ENCODE measurements at regions of chr16 and their contacts with region 1.

Region 1: DNA sequence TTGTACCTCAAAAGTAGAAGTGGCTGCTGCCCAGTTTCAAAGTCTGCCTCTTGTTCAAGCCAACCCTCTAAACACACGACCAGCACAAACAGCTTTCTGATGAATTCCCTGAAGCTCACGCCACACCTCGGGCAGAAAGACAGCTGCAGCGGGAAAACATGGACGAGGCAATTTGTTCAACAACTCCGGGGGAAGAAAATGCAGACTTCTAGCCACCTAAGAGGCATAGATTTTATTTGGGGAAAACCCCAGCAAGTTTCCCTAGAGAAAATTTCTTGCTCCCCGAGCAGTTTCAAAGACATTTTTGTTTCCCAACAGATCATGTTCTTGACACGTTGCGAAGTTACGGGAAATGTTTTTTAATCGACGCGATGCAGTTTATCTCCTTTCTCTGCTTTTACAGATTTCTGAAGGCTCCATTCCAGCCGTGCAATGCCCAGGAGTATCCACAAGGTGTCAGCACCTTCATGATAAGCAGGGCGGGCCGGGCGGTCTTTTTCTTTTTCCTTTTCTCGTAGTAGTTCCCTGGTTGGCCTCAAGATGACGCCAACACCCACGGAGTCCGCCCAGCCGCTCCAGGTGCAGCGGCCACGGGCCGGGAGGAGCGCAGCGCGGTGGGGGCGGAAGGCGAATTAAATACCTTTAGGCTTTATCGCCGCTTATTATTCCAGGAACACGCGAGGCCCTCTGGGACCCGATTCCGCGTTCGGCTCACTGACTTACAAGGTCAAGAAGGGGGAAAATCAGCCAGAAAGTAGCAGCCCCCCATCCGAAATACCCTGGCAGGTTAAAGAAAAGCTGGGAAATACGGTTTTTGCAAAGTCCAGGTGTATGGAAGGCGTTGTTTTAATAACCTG is 2.9 kb upstream of the FOXC2 start:
- DNase-seq: peak; percentile 91 to 92
- H3K4me3 ChIP-seq: no peak overlapping the region
- H3K27ac ChIP-seq: no peak overlapping the region
- H3K4me1 ChIP-seq: peaks cover 11 to 17% of the 10 kb centered on the region in 2 donors
- H3K27me3 ChIP-seq: peaks cover 8% of the 10 kb centered on the region
- CTCF ChIP-seq: peak; percentile 98 to 100 (median 99)
- POLR2A ChIP-seq: no peak

Region 2: GRCh38 chr16:86910161-86910769 is 346.5 kb after region 1 on chr16:
- intact Hi-C with region 1: no loop called
- DNase-seq: no peak
- H3K4me3 ChIP-seq: no peak overlapping the region
- H3K27ac ChIP-seq: no peak overlapping the region
- H3K4me1 ChIP-seq: no peaks in the 10 kb centered on the region
- H3K27me3 ChIP-seq: no peaks in the 10 kb centered on the region
- CTCF ChIP-seq: no peak
- POLR2A ChIP-seq: no peak

Region 3: GRCh38 chr16:87059994-87060986 is 496.6 kb after region 1 on chr16:
- intact Hi-C with region 1: loop called (anchors 5 kb)
- DNase-seq: peak; percentile 20 to 30
- H3K4me3 ChIP-seq: peak overlapping the region in 1 of 3 donors; percentile 4
- H3K27ac ChIP-seq: no peak overlapping the region
- H3K4me1 ChIP-seq: peaks cover 0 to 21% of the 10 kb centered on the region in 2 donors
- H3K27me3 ChIP-seq: no peaks in the 10 kb centered on the region
- CTCF ChIP-seq: no peak
- POLR2A ChIP-seq: no peak

Region 4: GRCh38 chr16:87278191-87279095 is 714.7 kb after region 1 on chr16:
- intact Hi-C with region 1: loop called (anchors 5 kb)
- DNase-seq: peak; percentile 59 to 62
- H3K4me3 ChIP-seq: no peak overlapping the region
- H3K27ac ChIP-seq: no peak overlapping the region
- H3K4me1 ChIP-seq: peaks cover 0 to 3% of the 10 kb centered on the region in 2 donors
- H3K27me3 ChIP-seq: no peaks in the 10 kb centered on the region
- CTCF ChIP-seq: peak in 5 of 6 experiments; percentile 43 to 83 (median 55)
- POLR2A ChIP-seq: no peak

Region 5: GRCh38 chr16:87291944-87292343 is 728.2 kb after region 1 on chr16:
- intact Hi-C with region 1: loop called (anchors 5 kb)
- DNase-seq: no peak
- H3K4me3 ChIP-seq: no peak overlapping the region
- H3K27ac ChIP-seq: no peak overlapping the region
- H3K4me1 ChIP-seq: no peaks in the 10 kb centered on the region
- H3K27me3 ChIP-seq: no peaks in the 10 kb centered on the region
- CTCF ChIP-seq: no peak
- POLR2A ChIP-seq: no peak